HAP-1 (cell line): ENCODE measurements at regions of chr7 and their contacts with region 1.

Region 1: DNA sequence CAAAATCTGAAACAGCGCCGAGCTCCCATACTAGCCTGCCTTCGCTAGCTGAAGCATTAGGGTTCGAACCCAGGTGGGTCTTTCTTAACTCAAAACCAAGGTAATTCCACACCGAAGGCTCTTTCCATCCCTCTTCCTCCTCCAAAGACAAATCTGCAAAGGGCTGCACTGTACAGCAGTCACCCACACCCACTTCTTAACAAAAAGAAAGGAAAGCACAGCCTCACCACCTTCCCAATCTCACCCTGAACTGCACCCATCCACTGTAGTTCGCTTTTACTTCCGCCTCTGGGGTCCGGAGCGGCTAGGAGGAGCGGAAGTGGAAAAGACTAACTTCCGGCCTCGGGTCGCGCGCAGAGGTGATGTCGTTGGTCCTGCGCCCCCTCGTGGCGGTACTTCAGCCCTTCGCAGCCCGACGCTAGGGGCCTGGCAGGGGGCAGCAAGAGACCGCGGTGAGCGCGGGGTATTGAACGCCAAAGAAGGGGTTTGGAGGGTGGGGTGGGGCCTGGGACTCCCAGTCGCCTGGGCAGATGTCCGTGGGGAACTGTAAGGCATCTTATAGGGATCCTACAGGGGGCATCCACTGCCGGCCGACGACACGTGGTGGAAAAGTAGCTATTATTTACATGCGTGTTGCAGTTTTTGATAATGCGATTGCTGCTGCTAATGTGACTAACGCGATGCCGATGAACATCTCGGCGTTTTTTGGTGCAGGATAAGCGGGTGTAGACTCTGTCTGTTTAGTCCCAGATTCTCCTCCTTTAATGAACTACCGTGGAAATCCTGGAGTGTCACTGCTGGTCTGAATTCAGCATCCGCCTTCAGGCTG is at the start of gene MTERF1:
- DNase-seq: peak; percentile 90 to 97
- H3K4me3 ChIP-seq: peak within 1 kb of the TSS; percentile 81
- H3K4me1 ChIP-seq: peaks cover 7% of the 10 kb centered on the region
- H3K27me3 ChIP-seq: no peaks in the 10 kb centered on the region

Region 2: GRCh38 chr7:91556944-91557638 is 323.5 kb before region 1 on chr7:
- in situ Hi-C with region 1: no loop called
- DNase-seq: no peak
- H3K4me3 ChIP-seq: no peak overlapping the region
- H3K4me1 ChIP-seq: no peaks in the 10 kb centered on the region
- H3K27me3 ChIP-seq: no peaks in the 10 kb centered on the region

Region 3: DNA sequence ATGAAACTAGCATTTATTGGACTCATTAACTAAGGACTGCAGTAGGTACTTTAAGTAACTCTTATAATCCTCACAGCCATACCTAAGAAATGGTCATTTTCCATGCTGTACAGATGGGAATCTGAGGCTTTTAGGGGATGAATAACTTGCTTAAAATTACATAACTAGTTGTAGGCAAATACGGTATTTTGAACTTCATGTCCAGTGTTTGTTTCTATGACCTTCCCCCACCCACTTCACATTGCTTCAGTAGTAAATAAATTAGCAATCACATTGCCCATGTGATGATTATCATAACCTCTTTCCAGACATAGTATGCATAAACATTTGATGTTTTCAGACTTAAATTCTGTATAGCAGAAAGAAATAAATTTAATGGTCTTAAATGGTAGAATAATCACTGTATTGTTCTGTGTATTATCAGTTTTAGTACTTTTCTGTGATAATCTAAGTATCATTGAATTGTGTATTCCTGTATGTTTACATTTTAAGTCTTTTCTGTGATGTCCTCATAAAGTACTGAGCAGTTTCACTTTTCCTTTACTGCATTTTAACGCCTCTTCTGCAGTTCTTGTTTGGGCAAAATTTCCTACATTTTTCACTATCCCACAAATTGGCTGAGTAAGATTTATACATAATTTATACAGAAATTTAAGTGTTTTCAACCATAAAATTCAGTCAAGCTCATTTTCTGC is 413.4 kb after region 1 on chr7:
- in situ Hi-C with region 1: no loop called
- DNase-seq: no peak
- H3K4me3 ChIP-seq: no peak overlapping the region
- H3K4me1 ChIP-seq: peaks cover 34% of the 10 kb centered on the region
- H3K27me3 ChIP-seq: no peaks in the 10 kb centered on the region

Region 4: GRCh38 chr7:92447345-92448204 is 566.9 kb after region 1 on chr7 and contains the start of gene GATAD1:
- in situ Hi-C with region 1: loop called (anchors 25 kb)
- DNase-seq: peak; percentile 89 to 94
- H3K4me3 ChIP-seq: peak within 1 kb of the TSS; percentile 86
- H3K4me1 ChIP-seq: peaks cover 10% of the 10 kb centered on the region; the same call in 1 of the 2 replicates
- H3K27me3 ChIP-seq: no peaks in the 10 kb centered on the region

Region 5: DNA sequence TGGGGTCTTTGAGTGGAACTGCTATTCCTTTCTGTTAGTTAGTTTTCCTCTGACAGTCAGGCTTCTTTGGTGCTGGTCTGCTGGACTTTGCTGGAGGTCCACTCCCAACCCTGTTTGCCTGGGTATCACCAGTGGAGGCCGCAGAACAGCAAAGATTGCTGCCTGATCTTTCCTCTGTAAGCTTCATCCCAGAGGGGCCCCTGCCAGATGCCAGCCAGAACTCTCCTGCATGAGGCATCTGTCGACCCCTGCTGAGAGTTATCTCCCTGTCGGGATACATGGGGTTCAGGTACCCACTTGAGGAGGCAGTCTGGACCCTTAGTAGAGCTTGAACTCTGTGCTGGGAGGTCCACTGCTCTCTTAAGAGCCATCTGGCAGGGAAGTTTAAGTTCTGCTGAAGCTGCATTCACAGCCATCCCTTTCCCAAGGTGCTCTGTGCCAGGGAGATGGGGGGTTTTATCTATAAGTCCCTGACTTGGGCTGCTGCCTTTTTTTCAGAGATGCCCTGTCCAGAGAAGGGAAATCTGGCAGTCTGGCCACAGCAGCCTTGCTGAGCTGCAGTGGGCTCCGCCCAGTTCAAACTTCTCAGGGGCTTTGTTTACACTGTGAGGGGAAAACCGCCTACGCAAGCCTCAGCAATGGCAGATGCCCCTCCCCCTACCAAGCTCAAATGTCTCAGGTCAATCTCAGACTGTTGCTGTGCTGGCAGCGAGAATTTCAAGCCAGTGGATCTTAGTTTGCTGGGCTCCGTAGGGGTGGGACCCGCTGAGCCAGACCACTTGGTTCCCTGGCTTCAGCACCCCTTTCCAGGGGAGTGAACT is 1045.5 kb after region 1 on chr7:
- in situ Hi-C with region 1: no loop called
- DNase-seq: peak in 1 of 2 experiments; percentile 47
- H3K4me3 ChIP-seq: no peak overlapping the region
- H3K4me1 ChIP-seq: no peaks in the 10 kb centered on the region
- H3K27me3 ChIP-seq: no peaks in the 10 kb centered on the region; the same call in 1 of the 2 replicates